ENCODE measurements at regions of chr3 and their contacts with region 1.

Region 1: DNA sequence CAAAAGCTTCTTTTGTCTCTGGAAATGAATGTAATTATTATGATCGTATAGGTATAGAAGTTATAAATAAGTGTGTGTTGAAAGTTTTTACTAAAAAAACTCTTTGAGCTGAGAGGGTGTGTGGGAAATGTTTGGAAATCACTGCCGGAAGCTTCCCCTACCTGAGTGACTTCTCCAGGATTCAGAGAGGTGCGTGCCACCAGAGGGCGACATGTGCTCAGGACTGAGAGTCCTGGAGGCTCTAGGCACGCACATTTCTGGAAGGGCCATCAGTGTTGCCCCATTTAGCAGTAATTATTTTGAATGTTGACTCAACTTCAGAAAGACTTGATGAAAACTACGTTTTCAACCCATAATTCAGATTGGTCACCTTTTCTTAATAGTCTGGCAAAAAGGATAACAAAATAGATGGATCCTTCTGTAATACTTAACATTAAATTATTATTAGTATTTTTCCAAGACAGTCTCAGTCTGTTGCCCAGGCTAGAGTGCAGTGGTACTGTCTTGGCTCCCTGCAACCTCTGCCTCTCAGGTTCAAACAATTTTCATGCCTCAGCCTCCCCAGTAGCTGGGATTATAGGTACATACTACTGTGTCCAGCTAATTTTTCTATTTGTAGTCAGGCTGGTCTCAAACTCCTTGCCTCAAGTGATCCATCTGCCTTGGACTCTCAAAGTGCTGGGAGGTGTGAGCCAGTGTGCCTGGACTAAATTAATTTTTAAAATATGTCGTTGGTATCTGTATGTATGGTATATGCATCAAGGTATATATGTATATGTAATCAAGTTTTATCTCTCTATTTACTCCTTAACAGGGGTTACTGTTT is 34.5 kb downstream of the GPR171 start:
- DNase-seq: no peak
- ATAC-seq: peak; percentile 81
- H3K4me3 ChIP-seq: no peak overlapping the region
- H3K27ac ChIP-seq: no peak overlapping the region
- H3K4me1 ChIP-seq: peaks cover 21% of the 10 kb centered on the region
- H3K27me3 ChIP-seq: no peaks in the 10 kb centered on the region
- CTCF ChIP-seq: peak; percentile 78 to 92 (median 87)
- EP300 ChIP-seq: no peak
- POLR2A ChIP-seq: no peak
- RAD21 ChIP-seq: peak; percentile 90

Region 2: GRCh38 chr3:151067158-151067557 is 101.3 kb before region 1 on chr3:
- CTCF ChIA-PET with region 1: no interaction called
- POLR2A ChIA-PET with region 1: no interaction called
- RAD21 ChIA-PET with region 1: no interaction called
- SMC1A ChIA-PET with region 1: no interaction called
- in situ Hi-C with region 1: no loop called
- intact Hi-C with region 1: no loop called
- DNase-seq: no peak
- ATAC-seq: peak; percentile 69
- H3K4me3 ChIP-seq: no peak overlapping the region
- H3K27ac ChIP-seq: no peak overlapping the region
- H3K4me1 ChIP-seq: no peaks in the 10 kb centered on the region
- H3K27me3 ChIP-seq: no peaks in the 10 kb centered on the region
- CTCF ChIP-seq: peak; percentile 30 to 44 (median 34); a peak in 4 of 6 replicates
- EP300 ChIP-seq: no peak
- POLR2A ChIP-seq: no peak
- RAD21 ChIP-seq: peak; percentile 57

Region 3: DNA sequence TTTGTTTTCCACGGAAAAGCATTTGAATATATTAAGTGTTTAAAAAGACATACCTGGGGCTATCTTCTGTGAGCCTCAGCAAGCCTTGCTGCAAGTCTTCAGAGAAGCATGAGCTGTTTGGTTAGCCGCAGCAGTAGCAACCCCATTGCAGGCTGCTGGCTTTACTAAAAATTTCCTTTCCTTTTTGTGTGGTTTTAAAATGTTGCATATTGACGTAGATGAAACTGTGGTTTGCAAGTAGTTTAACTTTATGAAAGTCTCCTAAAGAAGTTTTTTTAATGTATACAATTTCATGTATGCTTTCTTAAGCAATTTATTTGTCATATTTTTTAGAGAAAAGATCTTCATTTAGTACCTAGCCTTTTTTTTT is 34.6 kb after region 1 on chr3 and contains the start of gene GPR171:
- CTCF ChIA-PET with region 1: interaction called, 10 read pairs
- POLR2A ChIA-PET with region 1: no interaction called
- RAD21 ChIA-PET with region 1: interaction called, 7 read pairs
- SMC1A ChIA-PET with region 1: interaction called, 23 read pairs
- in situ Hi-C with region 1: no loop called
- intact Hi-C with region 1: loop called (anchors 2 kb)
- DNase-seq: peak; percentile 33
- ATAC-seq: peak; percentile 97
- H3K4me3 ChIP-seq: no peak within 1 kb of the TSS
- H3K27ac ChIP-seq: no peak within 1 kb of the TSS
- H3K4me1 ChIP-seq: no peaks in the 10 kb centered on the region; the same call in 1 of the 2 replicates
- H3K27me3 ChIP-seq: no peaks in the 10 kb centered on the region; a peak in 1 of 4 replicates
- CTCF ChIP-seq: no peak
- EP300 ChIP-seq: peak; percentile 82 to 87
- POLR2A ChIP-seq: no peak
- RAD21 ChIP-seq: no peak
- polyA plus RNA-seq, gene GPR171: 0.05 TPM in 1 of 2 experiments, not detected in the other

Region 4: DNA sequence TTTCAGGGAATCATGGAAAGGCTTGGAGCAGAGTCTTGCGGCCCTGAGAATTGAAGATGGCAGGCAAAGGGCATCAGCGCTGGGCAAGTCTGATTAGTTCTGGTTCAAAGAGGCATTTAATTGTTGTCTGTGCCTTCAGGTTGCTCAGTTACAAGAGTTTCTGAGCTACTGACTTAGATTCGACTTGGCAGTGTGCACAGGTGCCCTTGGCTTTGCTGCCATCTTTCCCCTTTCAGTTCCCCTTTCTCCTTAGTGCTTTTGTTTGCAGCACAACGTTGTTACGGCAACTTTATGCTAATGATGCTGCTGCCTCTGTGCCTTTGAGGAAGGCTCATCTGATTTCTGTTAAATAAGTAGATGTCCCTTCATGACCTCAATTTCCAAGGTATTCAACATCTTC is 97.4 kb after region 1 on chr3:
- CTCF ChIA-PET with region 1: interaction called, 11 read pairs
- POLR2A ChIA-PET with region 1: no interaction called
- RAD21 ChIA-PET with region 1: interaction called, 3 read pairs
- SMC1A ChIA-PET with region 1: interaction called, 11 read pairs
- in situ Hi-C with region 1: no loop called
- intact Hi-C with region 1: no loop called
- DNase-seq: peak; percentile 69
- ATAC-seq: peak; percentile 98
- H3K4me3 ChIP-seq: no peak overlapping the region
- H3K27ac ChIP-seq: no peak overlapping the region
- H3K4me1 ChIP-seq: peaks cover 7% of the 10 kb centered on the region; the same call in 1 of the 2 replicates
- H3K27me3 ChIP-seq: no peaks in the 10 kb centered on the region
- CTCF ChIP-seq: no peak
- EP300 ChIP-seq: peak; percentile 47 to 52; a peak in 3 of 4 replicates
- POLR2A ChIP-seq: no peak
- RAD21 ChIP-seq: no peak

Region 5: GRCh38 chr3:151282921-151283320 is 114.4 kb after region 1 on chr3:
- CTCF ChIA-PET with region 1: interaction called, 42 read pairs
- POLR2A ChIA-PET with region 1: no interaction called
- RAD21 ChIA-PET with region 1: interaction called, 23 read pairs
- SMC1A ChIA-PET with region 1: interaction called, 57 read pairs
- in situ Hi-C with region 1: loop called (anchors 5 kb)
- intact Hi-C with region 1: loop called (anchors 1 kb)
- DNase-seq: no peak
- ATAC-seq: peak; percentile 77
- H3K4me3 ChIP-seq: no peak overlapping the region
- H3K27ac ChIP-seq: no peak overlapping the region
- H3K4me1 ChIP-seq: peaks cover 6% of the 10 kb centered on the region
- H3K27me3 ChIP-seq: no peaks in the 10 kb centered on the region
- CTCF ChIP-seq: peak; percentile 49 to 67 (median 53); a peak in 5 of 6 replicates
- EP300 ChIP-seq: no peak
- POLR2A ChIP-seq: no peak
- RAD21 ChIP-seq: peak; percentile 90

Region 6: GRCh38 chr3:151316267-151316991 is 147.9 kb after region 1 on chr3 and contains the start of gene GPR87:
- CTCF ChIA-PET with region 1: no interaction called
- POLR2A ChIA-PET with region 1: no interaction called
- RAD21 ChIA-PET with region 1: no interaction called
- SMC1A ChIA-PET with region 1: no interaction called
- in situ Hi-C with region 1: no loop called
- intact Hi-C with region 1: no loop called
- DNase-seq: no peak
- ATAC-seq: peak; percentile 84
- H3K4me3 ChIP-seq: no peak within 1 kb of the TSS
- H3K27ac ChIP-seq: no peak within 1 kb of the TSS
- H3K4me1 ChIP-seq: no peaks in the 10 kb centered on the region
- H3K27me3 ChIP-seq: no peaks in the 10 kb centered on the region; a peak in 1 of 4 replicates
- CTCF ChIP-seq: no peak
- EP300 ChIP-seq: no peak
- POLR2A ChIP-seq: no peak
- RAD21 ChIP-seq: no peak
- polyA plus RNA-seq, gene GPR87: 0.16 TPM in 1 of 2 experiments, not detected in the other

Region 7: DNA sequence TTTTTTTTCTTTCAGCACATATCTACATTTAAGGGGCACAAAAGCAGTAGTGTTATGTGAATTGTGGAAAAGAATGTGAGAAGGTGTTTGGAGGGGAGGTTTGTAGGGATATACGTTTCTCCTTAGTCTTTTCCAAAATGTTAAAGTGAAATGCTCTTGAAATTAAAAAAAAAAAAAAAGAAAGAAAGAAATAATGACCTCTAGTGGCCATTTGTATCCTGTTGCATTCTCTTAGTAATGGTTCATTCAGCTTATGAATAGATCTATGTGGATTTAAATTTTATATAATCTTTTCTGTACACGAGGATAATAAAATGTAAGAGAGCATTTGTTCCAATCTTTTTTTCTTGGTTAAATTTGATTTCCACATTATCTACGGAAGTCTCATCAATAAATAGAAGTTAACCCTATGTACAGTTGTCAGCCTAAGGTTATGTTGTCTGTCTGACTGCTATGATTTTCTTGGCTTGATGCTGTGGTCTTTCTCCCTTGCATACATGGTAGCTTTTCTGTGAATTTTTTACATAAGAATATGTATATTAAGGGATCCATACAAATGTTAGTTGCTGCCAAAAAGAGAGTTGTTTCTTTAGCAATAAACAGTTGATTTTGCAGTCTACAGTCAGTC is 159.2 kb after region 1 on chr3:
- CTCF ChIA-PET with region 1: interaction called, 20 read pairs
- POLR2A ChIA-PET with region 1: no interaction called
- RAD21 ChIA-PET with region 1: interaction called, 3 read pairs
- SMC1A ChIA-PET with region 1: no interaction called
- in situ Hi-C with region 1: no loop called
- intact Hi-C with region 1: no loop called
- DNase-seq: no peak
- ATAC-seq: peak; percentile 73
- H3K4me3 ChIP-seq: no peak overlapping the region
- H3K27ac ChIP-seq: no peak overlapping the region
- H3K4me1 ChIP-seq: no peaks in the 10 kb centered on the region
- H3K27me3 ChIP-seq: peaks cover 0 to 3% of the 10 kb centered on the region in 2 experiments; a peak in 1 of 4 replicates
- CTCF ChIP-seq: peak in 2 of 3 experiments; percentile 40 to 47; a peak in 4 of 6 replicates
- EP300 ChIP-seq: no peak
- POLR2A ChIP-seq: no peak
- RAD21 ChIP-seq: 0 out of 2 replicates have a peak, but pooled peaks have one; percentile 4

Region 8: DNA sequence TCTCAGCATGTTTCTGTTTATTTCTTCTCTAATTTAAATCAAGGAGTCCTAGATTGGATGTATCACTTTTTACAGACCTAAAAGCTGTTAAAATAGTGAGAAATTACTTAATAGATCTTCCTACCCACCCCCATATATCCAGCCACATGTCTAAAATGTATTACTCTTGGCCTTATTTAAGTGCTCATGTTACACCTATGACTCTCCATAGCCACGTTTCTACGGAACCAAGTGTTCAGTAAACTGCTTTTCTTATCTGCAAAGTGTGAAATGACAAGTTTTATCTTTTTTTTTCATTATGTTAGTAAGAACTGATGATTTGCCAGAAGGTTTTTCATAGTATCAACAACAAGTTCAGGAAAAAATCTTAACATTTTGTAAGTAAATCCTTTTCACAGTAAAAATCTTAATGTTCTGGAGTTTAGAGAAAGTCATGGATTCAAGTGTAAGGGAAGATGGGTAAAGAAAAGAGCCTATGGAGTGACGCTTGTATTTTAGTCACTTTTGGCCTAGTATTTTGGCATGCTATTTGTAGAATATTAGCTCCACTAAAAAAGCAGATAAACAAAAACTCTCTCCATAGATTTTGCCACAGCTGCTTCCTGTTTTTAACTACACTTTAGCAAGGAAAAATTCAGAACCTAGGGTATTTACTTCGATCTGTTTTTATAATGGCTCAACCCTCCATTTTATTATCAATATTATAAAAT is 333.6 kb after region 1 on chr3:
- CTCF ChIA-PET with region 1: no interaction called
- POLR2A ChIA-PET with region 1: no interaction called
- RAD21 ChIA-PET with region 1: no interaction called
- SMC1A ChIA-PET with region 1: no interaction called
- in situ Hi-C with region 1: no loop called
- intact Hi-C with region 1: no loop called
- DNase-seq: no peak
- ATAC-seq: no peak
- H3K4me3 ChIP-seq: no peak overlapping the region
- H3K27ac ChIP-seq: no peak overlapping the region
- H3K4me1 ChIP-seq: no peaks in the 10 kb centered on the region
- H3K27me3 ChIP-seq: no peaks in the 10 kb centered on the region
- CTCF ChIP-seq: no peak
- EP300 ChIP-seq: no peak
- POLR2A ChIP-seq: no peak
- RAD21 ChIP-seq: no peak